HCT116 (cell line): ENCODE measurements at regions of chr10 and their contacts with region 1.

Region 1: GRCh38 chr10:62681211-62681940 is 123.1 kb upstream of the ADO start:
- DNase-seq: no peak
- ATAC-seq: peak; percentile 47
- H3K4me3 ChIP-seq: no peak overlapping the region
- H3K27ac ChIP-seq: no peak overlapping the region
- H3K4me1 ChIP-seq: no peaks in the 10 kb centered on the region
- H3K27me3 ChIP-seq: no peaks in the 10 kb centered on the region
- CTCF ChIP-seq: no peak
- POLR2A ChIP-seq: no peak
- RAD21 ChIP-seq: no peak

Region 2: GRCh38 chr10:62529396-62529795 is 152.0 kb before region 1 on chr10:
- CTCF ChIA-PET with region 1: no interaction called
- POLR2A ChIA-PET with region 1: no interaction called
- RAD21 ChIA-PET with region 1: no interaction called
- intact Hi-C with region 1: no loop called
- DNase-seq: no peak
- ATAC-seq: no peak
- H3K4me3 ChIP-seq: no peak overlapping the region
- H3K27ac ChIP-seq: no peak overlapping the region
- H3K4me1 ChIP-seq: no peaks in the 10 kb centered on the region
- H3K27me3 ChIP-seq: no peaks in the 10 kb centered on the region
- CTCF ChIP-seq: no peak
- POLR2A ChIP-seq: no peak
- RAD21 ChIP-seq: no peak

Region 3: DNA sequence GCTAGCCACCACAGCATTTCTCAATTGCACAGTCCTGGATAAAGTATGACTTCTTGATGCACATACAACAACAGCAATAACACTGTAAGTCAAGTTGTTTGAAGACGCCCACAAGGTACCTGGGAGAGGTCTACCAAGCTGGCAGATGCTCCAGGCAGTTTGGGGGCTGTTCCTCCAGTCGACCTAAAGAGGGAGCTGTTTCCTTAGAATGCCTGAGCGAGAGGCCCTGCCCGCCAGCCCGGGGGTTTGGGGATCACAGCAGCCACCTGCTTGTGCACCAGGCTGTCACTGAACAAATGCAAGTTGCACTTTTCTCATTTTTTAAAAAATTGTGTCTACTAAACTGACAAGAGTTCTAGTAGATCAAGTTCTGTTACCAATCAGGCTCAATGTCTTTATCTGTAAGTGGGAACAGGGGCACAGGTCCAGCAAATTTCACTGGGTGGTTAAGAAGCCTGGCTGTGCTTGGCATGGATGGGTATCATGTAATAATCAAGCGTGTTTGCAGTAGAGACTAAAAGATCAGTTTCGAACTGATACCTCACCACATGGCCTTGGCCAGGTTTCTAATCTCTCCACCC is 70.6 kb before region 1 on chr10:
- CTCF ChIA-PET with region 1: no interaction called
- POLR2A ChIA-PET with region 1: no interaction called
- RAD21 ChIA-PET with region 1: no interaction called
- intact Hi-C with region 1: loop called (anchors 5 kb)
- DNase-seq: peak; percentile 60
- ATAC-seq: peak; percentile 98
- H3K4me3 ChIP-seq: no peak overlapping the region
- H3K27ac ChIP-seq: no peak overlapping the region
- H3K4me1 ChIP-seq: peaks cover 0 to 14% of the 10 kb centered on the region in 2 experiments; a peak in 2 of 4 replicates
- H3K27me3 ChIP-seq: no peaks in the 10 kb centered on the region
- CTCF ChIP-seq: peak; percentile 84 to 99 (median 97)
- POLR2A ChIP-seq: no peak
- RAD21 ChIP-seq: peak; percentile 96

Region 4: DNA sequence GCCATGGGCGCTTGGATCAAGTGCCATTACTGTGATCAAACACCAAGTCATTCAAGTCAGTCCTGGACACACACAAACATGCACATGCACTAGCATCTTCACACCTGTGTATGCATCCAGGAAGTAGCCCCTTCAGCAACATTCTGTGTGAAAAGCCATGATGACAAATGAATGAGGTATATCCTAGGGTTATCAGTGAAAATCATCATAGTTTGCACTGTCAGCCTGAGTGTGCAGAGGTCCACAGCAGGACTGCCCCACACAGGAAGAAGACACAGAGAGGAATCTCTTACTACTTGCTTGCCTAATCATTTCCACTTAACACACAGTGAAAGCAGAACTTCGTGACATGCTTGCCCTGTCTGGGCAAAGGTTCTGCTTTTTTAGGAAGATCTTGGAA is 60.9 kb before region 1 on chr10:
- CTCF ChIA-PET with region 1: no interaction called
- POLR2A ChIA-PET with region 1: no interaction called
- RAD21 ChIA-PET with region 1: no interaction called
- intact Hi-C with region 1: loop called (anchors 1 kb)
- DNase-seq: no peak
- ATAC-seq: no peak
- H3K4me3 ChIP-seq: no peak overlapping the region
- H3K27ac ChIP-seq: no peak overlapping the region
- H3K4me1 ChIP-seq: no peaks in the 10 kb centered on the region
- H3K27me3 ChIP-seq: no peaks in the 10 kb centered on the region
- CTCF ChIP-seq: no peak
- POLR2A ChIP-seq: no peak
- RAD21 ChIP-seq: no peak

Region 5: GRCh38 chr10:63236113-63236935 is 554.9 kb after region 1 on chr10:
- CTCF ChIA-PET with region 1: no interaction called
- POLR2A ChIA-PET with region 1: no interaction called
- RAD21 ChIA-PET with region 1: no interaction called
- intact Hi-C with region 1: no loop called
- DNase-seq: peak; percentile 82
- ATAC-seq: peak; percentile 93
- H3K4me3 ChIP-seq: peak overlapping the region in 1 of 2 experiments; percentile 34; a peak in 1 of 4 replicates
- H3K27ac ChIP-seq: peak overlapping the region; percentile 81; the same call in 1 of the 2 replicates
- H3K4me1 ChIP-seq: peaks cover 27 to 36% of the 10 kb centered on the region in 2 experiments
- H3K27me3 ChIP-seq: no peaks in the 10 kb centered on the region
- CTCF ChIP-seq: no peak
- POLR2A ChIP-seq: no peak
- RAD21 ChIP-seq: 0 out of 2 replicates have a peak, but pooled peaks have one; percentile 16